HEK293 (cell line): ENCODE measurements at regions of chr1 and their contacts with region 1.

Region 1: GRCh38 chr1:92367496-92367895 is 68.6 kb downstream of the RPAP2 start:
- H3K4me3 ChIP-seq: no peak overlapping the region
- H3K27ac ChIP-seq: no peak overlapping the region
- H3K4me1 ChIP-seq: no peaks in the 10 kb centered on the region
- CTCF ChIP-seq: no peak

Region 2: GRCh38 chr1:92343061-92343460 is 24.4 kb before region 1 on chr1:
- CTCF ChIA-PET with region 1: no interaction called
- POLR2A ChIA-PET with region 1: no interaction called
- H3K4me3 ChIP-seq: no peak overlapping the region
- H3K27ac ChIP-seq: no peak overlapping the region
- H3K4me1 ChIP-seq: no peaks in the 10 kb centered on the region
- CTCF ChIP-seq: no peak

Region 3: DNA sequence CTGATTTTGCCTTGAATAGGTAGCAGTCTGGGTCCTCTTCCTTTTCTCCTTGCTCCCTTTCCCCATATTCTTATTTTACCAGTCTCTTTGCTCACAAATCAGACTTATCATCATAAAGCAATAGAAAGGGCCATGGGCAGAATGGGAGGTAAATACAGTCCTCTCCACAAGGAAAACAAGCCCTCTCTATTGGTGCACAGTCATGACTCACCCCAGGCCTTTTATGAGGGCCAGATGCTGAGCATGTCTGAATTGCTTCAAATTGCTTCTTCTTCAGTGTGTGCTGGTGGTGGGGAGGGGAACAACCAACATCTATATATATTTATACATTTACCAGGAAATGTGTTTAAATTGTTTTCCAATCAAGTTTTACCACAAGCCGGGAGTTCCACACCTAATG is 44.0 kb after region 1 on chr1:
- CTCF ChIA-PET with region 1: interaction called, 11 read pairs
- POLR2A ChIA-PET with region 1: no interaction called
- H3K4me3 ChIP-seq: no peak overlapping the region
- H3K27ac ChIP-seq: no peak overlapping the region
- H3K4me1 ChIP-seq: peaks cover 9% of the 10 kb centered on the region
- CTCF ChIP-seq: no peak